WTC11 (cell line): ENCODE measurements at regions of chr3 and their contacts with region 1.

Region 1: GRCh38 chr3:147361454-147362420 is 44.6 kb downstream of the ZIC4 start:
- DNase-seq: peak; percentile 96
- ATAC-seq: peak; percentile 50
- H3K4me3 Mint-ChIP-seq: peak overlapping the region; percentile 61
- H3K27ac Mint-ChIP-seq: no peak overlapping the region
- H3K4me1 Mint-ChIP-seq: peaks cover 48% of the 10 kb centered on the region
- H3K27me3 Mint-ChIP-seq: peaks cover 93% of the 10 kb centered on the region
- CTCF ChIP-seq: peak; percentile 98

Region 2: DNA sequence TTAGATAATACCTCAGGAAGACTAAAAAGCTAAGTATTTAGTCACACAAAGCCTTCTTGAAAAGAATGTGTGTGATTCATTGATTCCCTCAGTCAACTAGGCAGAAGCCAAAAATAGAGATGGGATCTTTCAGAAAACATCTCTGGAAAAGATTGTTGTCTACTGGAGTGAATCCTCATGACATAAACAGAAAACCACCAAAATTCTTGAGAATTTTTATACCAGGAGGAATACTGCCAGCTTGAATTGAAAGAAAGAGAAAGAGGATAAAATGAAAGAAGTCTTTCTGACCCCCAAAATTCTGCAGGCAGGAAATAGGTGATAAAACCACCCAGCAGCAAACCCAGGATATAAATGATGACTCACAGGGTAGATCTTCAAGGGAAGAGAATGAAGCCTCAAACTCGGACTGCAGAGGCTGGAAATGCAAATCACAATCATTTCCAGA is 393.5 kb before region 1 on chr3:
- CTCF ChIA-PET with region 1: no interaction called
- POLR2A ChIA-PET with region 1: no interaction called
- DNase-seq: no peak
- ATAC-seq: peak; percentile 57; the same call in 1 of the 2 replicates
- H3K4me3 Mint-ChIP-seq: no peak overlapping the region
- H3K27ac Mint-ChIP-seq: peak overlapping the region; percentile 19; the same call in 1 of the 2 replicates
- H3K4me1 Mint-ChIP-seq: peaks cover 16% of the 10 kb centered on the region
- H3K27me3 Mint-ChIP-seq: no peaks in the 10 kb centered on the region
- CTCF ChIP-seq: no peak

Region 3: GRCh38 chr3:147341727-147342126 is 20.0 kb before region 1 on chr3:
- CTCF ChIA-PET with region 1: interaction called, 10 read pairs
- POLR2A ChIA-PET with region 1: no interaction called
- DNase-seq: peak; percentile 47
- ATAC-seq: peak; percentile 99
- H3K4me3 Mint-ChIP-seq: no peak overlapping the region
- H3K27ac Mint-ChIP-seq: peak overlapping the region; percentile 55
- H3K4me1 Mint-ChIP-seq: peaks cover 46% of the 10 kb centered on the region
- H3K27me3 Mint-ChIP-seq: no peaks in the 10 kb centered on the region; the same call in none of the 2 replicates
- CTCF ChIP-seq: no peak

Region 4: DNA sequence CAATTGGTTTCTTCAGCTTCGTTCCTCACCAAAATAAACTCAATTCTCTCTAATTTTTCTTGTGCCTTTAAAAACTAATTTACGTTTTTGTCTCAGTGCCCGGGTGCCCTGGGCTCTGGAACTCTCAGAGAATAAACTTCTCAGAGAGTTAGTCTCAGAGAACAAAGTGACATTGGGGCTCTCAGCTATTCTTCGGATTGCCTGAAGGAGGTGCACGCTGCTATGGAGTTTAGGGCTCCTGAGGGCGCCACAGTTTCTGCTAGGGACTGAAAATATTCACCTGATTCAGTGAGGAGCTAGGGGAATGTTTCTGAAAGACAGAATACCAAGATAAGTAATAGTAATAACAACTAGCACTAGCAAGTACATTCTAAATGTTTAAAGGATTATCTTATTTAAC is 21.9 kb after region 1 on chr3:
- CTCF ChIA-PET with region 1: interaction called, 70 read pairs
- POLR2A ChIA-PET with region 1: interaction called, 3 read pairs
- DNase-seq: peak; percentile 53
- ATAC-seq: peak; percentile 36
- H3K4me3 Mint-ChIP-seq: no peak overlapping the region
- H3K27ac Mint-ChIP-seq: no peak overlapping the region
- H3K4me1 Mint-ChIP-seq: peaks cover 96% of the 10 kb centered on the region
- H3K27me3 Mint-ChIP-seq: peaks cover 97% of the 10 kb centered on the region
- CTCF ChIP-seq: no peak; the same call in 1 of the 2 replicates

Region 5: GRCh38 chr3:147397155-147397874 is 35.6 kb after region 1 on chr3:
- CTCF ChIA-PET with region 1: interaction called, 32 read pairs
- POLR2A ChIA-PET with region 1: interaction called, 9 read pairs
- DNase-seq: peak; percentile 85
- ATAC-seq: peak; percentile 43
- H3K4me3 Mint-ChIP-seq: peak overlapping the region; percentile 78
- H3K27ac Mint-ChIP-seq: peak overlapping the region; percentile 96
- H3K4me1 Mint-ChIP-seq: peaks cover 79% of the 10 kb centered on the region
- H3K27me3 Mint-ChIP-seq: peaks cover 98% of the 10 kb centered on the region
- CTCF ChIP-seq: no peak

Region 6: DNA sequence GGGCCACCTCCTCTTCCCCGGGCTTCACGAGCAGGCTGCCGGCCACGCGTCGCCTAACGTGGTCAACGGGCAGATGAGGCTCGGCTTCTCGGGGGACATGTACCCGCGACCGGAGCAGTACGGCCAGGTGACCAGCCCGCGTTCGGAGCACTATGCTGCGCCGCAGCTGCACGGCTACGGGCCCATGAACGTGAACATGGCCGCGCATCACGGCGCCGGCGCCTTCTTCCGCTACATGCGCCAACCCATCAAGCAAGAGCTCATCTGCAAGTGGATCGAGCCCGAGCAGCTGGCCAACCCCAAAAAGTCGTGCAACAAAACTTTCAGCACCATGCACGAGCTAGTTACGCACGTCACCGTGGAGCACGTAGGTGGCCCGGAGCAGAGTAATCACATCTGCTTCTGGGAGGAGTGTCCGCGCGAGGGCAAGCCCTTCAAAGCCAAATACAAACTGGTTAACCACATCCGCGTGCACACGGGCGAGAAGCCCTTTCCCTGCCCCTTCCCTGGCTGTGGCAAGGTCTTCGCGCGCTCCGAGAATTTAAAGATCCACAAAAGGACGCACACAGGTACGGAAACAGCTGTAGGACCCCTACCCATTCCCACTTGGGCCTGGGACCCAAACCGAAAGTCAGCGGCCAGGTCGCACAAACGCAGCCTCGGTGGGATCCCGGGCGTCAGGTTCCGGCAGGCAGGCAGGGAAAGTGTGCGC is 48.9 kb after region 1 on chr3:
- CTCF ChIA-PET with region 1: interaction called, 13 read pairs
- POLR2A ChIA-PET with region 1: no interaction called
- DNase-seq: peak; percentile 44
- ATAC-seq: peak; percentile 3; the same call in 1 of the 2 replicates
- H3K4me3 Mint-ChIP-seq: peak overlapping the region; percentile 73
- H3K27ac Mint-ChIP-seq: peak overlapping the region; percentile 15; the same call in 1 of the 2 replicates
- H3K4me1 Mint-ChIP-seq: peaks cover 76% of the 10 kb centered on the region
- H3K27me3 Mint-ChIP-seq: peaks cover 99% of the 10 kb centered on the region
- CTCF ChIP-seq: no peak

Region 7: DNA sequence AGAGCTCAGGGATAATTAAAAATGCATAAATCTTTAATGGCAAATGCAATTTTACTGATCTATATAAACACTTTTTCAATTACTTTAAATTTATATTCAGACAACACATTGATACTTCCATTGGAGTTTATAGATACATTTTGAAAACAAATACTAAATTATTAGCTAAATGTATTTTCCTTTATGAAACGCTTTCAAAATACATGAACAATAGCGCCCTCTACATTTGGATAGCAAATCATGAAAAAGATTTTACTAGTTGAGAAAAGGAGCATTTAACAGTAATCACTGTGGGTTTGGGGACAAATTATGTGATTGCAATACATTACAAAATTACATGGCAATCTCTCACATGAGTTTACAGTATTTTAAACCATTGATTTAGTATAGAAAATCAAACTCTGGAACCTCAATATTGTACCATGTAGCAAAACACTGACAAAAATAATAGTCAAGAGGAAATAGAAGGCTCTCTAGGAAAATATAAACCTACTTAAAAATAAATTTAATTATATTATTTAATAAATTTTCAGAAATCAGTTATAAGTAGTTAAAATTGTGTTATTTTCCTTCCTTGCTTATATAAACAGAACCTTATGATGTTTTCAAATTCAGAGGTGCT is 255.4 kb after region 1 on chr3:
- CTCF ChIA-PET with region 1: interaction called, 12 read pairs
- POLR2A ChIA-PET with region 1: no interaction called
- DNase-seq: no peak
- ATAC-seq: no peak
- H3K4me3 Mint-ChIP-seq: no peak overlapping the region
- H3K27ac Mint-ChIP-seq: no peak overlapping the region
- H3K4me1 Mint-ChIP-seq: peaks cover 27% of the 10 kb centered on the region
- H3K27me3 Mint-ChIP-seq: no peaks in the 10 kb centered on the region
- CTCF ChIP-seq: peak; percentile 59